ENCODE measurements at regions of chr17 and their contacts with region 1.

Region 1: GRCh38 chr17:48724251-48725003 is 1.4 kb downstream of the PRAC2 start:
- DNase-seq: peak; percentile 91
- ATAC-seq: peak; percentile 70
- H3K4me3 Mint-ChIP-seq: peak overlapping the region; percentile 40
- H3K27ac Mint-ChIP-seq: no peak overlapping the region
- H3K4me1 Mint-ChIP-seq: peaks cover 29% of the 10 kb centered on the region
- H3K27me3 Mint-ChIP-seq: peaks cover 88% of the 10 kb centered on the region
- CTCF ChIP-seq: peak; percentile 80

Region 2: DNA sequence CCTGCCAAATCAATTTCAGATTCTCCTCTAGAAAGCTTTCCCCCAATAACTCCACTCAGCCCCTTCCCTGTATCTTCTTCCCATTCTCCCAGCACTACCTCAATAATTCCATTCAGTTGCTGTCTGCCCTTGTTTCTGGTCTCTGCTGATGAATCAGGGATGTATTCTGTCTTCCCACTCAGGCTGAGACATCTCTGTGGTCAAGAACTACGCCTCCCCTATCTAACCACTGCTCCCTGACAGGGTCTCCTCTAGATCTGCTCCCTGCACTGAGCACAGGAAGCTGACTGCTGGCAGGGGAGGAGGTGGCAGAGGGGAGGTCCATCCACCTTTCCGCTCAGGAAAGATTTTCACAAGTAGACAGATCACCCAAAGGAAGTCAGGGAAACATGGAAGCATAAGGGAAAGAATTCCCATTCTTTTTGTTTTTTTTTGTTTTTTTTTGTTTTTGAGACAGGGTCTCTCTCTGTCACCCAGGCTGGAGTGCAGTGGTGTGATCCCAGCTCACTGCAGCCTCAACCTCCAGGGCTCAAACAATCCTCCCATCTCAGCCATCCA is 845.3 kb before region 1 on chr17:
- CTCF ChIA-PET with region 1: no interaction called
- POLR2A ChIA-PET with region 1: no interaction called
- intact Hi-C with region 1: no loop called
- DNase-seq: peak; percentile 17
- ATAC-seq: peak; percentile 65
- H3K4me3 Mint-ChIP-seq: no peak overlapping the region
- H3K27ac Mint-ChIP-seq: no peak overlapping the region
- H3K4me1 Mint-ChIP-seq: peaks cover 12% of the 10 kb centered on the region
- H3K27me3 Mint-ChIP-seq: peaks cover 17% of the 10 kb centered on the region
- CTCF ChIP-seq: no peak

Region 3: GRCh38 chr17:48543107-48543853 is 181.1 kb before region 1 on chr17:
- CTCF ChIA-PET with region 1: no interaction called
- POLR2A ChIA-PET with region 1: no interaction called
- intact Hi-C with region 1: no loop called
- DNase-seq: peak; percentile 76
- ATAC-seq: peak; percentile 63
- H3K4me3 Mint-ChIP-seq: peak overlapping the region; percentile 85
- H3K27ac Mint-ChIP-seq: peak overlapping the region; percentile 97
- H3K4me1 Mint-ChIP-seq: peaks cover 33% of the 10 kb centered on the region
- H3K27me3 Mint-ChIP-seq: peaks cover 1% of the 10 kb centered on the region
- CTCF ChIP-seq: peak; percentile 45

Region 4: DNA sequence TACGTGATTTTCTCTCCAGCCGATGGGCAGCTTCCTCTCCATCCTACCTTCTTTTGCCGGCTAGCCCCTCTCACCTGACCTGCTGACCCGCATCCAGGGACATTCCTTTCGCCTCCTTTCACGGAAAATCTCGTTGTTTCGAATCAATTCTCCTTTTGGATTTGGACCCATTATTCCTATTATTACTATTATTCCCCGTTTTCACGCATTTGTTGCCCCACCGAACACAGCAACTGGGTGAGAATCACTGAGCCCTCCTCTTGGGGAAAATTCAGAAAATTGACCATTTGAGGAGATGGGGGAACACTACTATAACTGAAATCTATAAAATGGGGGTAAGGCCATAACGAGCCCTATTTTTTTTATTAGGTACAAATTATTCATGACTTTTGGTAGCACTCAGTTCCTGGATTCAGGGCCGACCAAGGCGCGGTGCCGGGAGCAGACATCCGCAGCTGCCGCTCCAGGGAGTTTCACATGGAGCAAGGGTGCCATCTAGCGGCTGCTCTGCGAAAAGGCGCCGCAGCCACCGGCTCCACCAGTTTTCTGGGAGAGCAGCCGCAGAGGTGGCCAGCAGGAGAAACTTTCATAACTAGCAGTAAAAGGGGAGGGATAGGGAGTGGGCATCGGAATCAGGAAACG is 106.0 kb before region 1 on chr17:
- CTCF ChIA-PET with region 1: interaction called, 6 read pairs
- POLR2A ChIA-PET with region 1: no interaction called
- intact Hi-C with region 1: loop called (anchors 10 kb)
- DNase-seq: peak; percentile 83
- ATAC-seq: peak; percentile 69
- H3K4me3 Mint-ChIP-seq: peak overlapping the region; percentile 46
- H3K27ac Mint-ChIP-seq: no peak overlapping the region
- H3K4me1 Mint-ChIP-seq: peaks cover 32% of the 10 kb centered on the region
- H3K27me3 Mint-ChIP-seq: peaks cover 86% of the 10 kb centered on the region
- CTCF ChIP-seq: peak; percentile 99

Region 5: GRCh38 chr17:48745381-48746275 is 21.2 kb after region 1 on chr17:
- CTCF ChIA-PET with region 1: interaction called, 55 read pairs
- POLR2A ChIA-PET with region 1: interaction called, 5 read pairs
- intact Hi-C with region 1: loop called (anchors 5 kb)
- DNase-seq: no peak
- ATAC-seq: no peak
- H3K4me3 Mint-ChIP-seq: no peak overlapping the region
- H3K27ac Mint-ChIP-seq: no peak overlapping the region
- H3K4me1 Mint-ChIP-seq: no peaks in the 10 kb centered on the region
- H3K27me3 Mint-ChIP-seq: peaks cover 80% of the 10 kb centered on the region
- CTCF ChIP-seq: no peak

Region 6: DNA sequence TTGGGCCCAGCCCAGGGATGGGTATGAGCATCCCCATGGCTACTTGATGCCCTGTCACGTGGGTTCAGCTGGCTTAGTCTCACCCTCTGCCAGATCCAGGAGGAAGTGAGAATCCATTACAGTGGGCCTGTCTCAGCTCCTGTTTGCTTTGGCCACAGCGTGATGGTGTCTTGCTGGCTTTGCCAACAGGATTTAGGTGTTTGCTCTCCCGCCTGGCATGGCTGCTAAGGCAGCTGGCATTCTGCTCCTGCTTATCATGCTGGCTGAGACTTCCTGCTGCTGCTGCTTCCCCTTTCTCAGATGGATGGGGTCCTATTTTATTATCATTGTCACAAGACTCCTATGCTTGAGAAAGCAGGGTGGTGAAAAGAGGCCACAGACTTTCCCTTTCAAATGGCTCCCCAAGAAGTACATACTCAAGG is 32.4 kb after region 1 on chr17:
- CTCF ChIA-PET with region 1: interaction called, 32 read pairs
- POLR2A ChIA-PET with region 1: no interaction called
- intact Hi-C with region 1: loop called (anchors 5 kb)
- DNase-seq: no peak
- ATAC-seq: no peak
- H3K4me3 Mint-ChIP-seq: no peak overlapping the region
- H3K27ac Mint-ChIP-seq: no peak overlapping the region
- H3K4me1 Mint-ChIP-seq: peaks cover 2% of the 10 kb centered on the region
- H3K27me3 Mint-ChIP-seq: peaks cover 74% of the 10 kb centered on the region
- CTCF ChIP-seq: no peak

Region 7: DNA sequence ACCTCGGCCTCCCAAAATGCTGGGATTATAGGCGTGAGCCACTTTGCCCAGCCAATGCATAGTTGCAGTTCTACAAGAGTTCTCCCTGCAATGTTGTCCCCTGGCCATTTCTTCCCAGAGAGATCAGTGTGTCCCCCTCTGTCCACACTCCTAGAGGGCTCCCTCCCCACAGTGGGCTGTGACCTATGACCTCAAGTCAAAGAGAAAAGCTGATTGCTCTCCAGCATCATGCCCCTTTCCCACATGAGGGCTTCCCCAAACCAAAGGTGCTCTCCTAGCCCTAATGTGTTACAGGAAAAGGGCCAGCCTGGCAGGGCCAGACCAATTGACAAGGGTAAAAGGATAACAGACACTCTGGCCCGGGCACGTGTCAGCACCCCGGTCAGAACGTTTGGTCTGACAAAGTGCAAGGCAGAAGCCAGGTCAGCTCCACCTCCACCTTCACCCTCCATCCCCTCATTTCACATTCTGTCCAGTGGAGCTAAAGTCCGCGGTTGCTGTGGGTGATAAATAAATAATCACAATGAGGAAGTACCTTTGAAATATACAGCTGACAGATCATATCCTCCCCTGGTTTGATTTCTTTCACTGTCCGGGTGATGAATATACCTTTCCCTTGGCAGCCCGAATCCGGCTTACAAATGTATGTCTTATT is 74.8 kb after region 1 on chr17:
- CTCF ChIA-PET with region 1: interaction called, 41 read pairs
- POLR2A ChIA-PET with region 1: no interaction called
- intact Hi-C with region 1: no loop called
- DNase-seq: no peak
- ATAC-seq: no peak
- H3K4me3 Mint-ChIP-seq: no peak overlapping the region
- H3K27ac Mint-ChIP-seq: no peak overlapping the region
- H3K4me1 Mint-ChIP-seq: no peaks in the 10 kb centered on the region
- H3K27me3 Mint-ChIP-seq: peaks cover 17% of the 10 kb centered on the region
- CTCF ChIP-seq: no peak

Region 8: GRCh38 chr17:48816774-48817590 is 92.6 kb after region 1 on chr17 and contains the start of gene TTLL6:
- CTCF ChIA-PET with region 1: interaction called, 15 read pairs
- POLR2A ChIA-PET with region 1: no interaction called
- intact Hi-C with region 1: no loop called
- DNase-seq: peak; percentile 76
- ATAC-seq: peak; percentile 94
- H3K4me3 Mint-ChIP-seq: peak within 1 kb of the TSS; percentile 63
- H3K27ac Mint-ChIP-seq: no peak within 1 kb of the TSS
- H3K4me1 Mint-ChIP-seq: peaks cover 18% of the 10 kb centered on the region
- H3K27me3 Mint-ChIP-seq: peaks cover 46% of the 10 kb centered on the region
- CTCF ChIP-seq: no peak
- total RNA-seq, gene TTLL6: not detected

Region 9: GRCh38 chr17:49277638-49278037 is 553.2 kb after region 1 on chr17:
- CTCF ChIA-PET with region 1: no interaction called
- POLR2A ChIA-PET with region 1: no interaction called
- intact Hi-C with region 1: no loop called
- DNase-seq: no peak
- ATAC-seq: no peak
- H3K4me3 Mint-ChIP-seq: no peak overlapping the region
- H3K27ac Mint-ChIP-seq: no peak overlapping the region
- H3K4me1 Mint-ChIP-seq: no peaks in the 10 kb centered on the region
- H3K27me3 Mint-ChIP-seq: no peaks in the 10 kb centered on the region
- CTCF ChIP-seq: no peak